Psoas muscle (tissue), 8 donors: ENCODE measurements at regions of chrX and their contacts with region 1.

Region 1: GRCh38 chrX:136055651-136056221 is 70.5 kb downstream of the SLC9A6 start:
- DNase-seq: peak; percentile 15 to 58
- ATAC-seq: peak; percentile 74 to 95 (median 92)
- H3K4me3 ChIP-seq: peak overlapping the region; percentile 16
- H3K27ac ChIP-seq: peak overlapping the region; percentile 69
- H3K4me1 ChIP-seq: peaks cover 21% of the 10 kb centered on the region
- H3K27me3 ChIP-seq: peaks cover 0 to 4% (median 0%) of the 10 kb centered on the region in 3 donors
- CTCF ChIP-seq: no peak

Region 2: DNA sequence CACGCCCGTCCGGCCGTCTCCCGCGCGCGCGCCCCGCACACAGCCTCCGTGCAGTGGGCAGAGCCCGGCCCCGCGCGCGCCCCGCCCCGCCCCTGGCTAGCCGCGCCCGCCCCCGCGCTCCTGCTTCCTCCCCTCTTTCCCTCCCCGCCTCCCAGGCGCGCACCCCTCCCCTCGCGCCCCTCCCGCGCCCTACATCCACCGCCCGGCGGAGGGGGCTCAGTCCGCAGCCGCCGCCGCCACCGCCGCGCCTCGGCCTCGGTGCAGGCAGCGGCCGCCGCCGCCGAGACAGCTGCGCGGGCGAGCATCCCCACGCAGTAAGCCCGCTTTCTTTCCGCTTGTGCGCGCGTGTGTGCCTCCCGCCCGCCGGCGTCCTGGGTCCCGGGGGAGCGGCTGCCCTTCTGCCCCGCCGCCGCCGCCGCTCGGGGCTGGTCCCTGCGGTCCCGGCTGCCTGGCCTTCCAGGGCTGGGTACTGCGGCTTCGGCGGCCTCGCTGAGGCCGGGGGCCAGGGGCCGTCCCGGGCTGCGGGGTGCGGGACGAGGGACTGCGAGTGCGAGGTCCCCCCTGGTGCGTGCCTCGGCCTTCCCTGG is 91.7 kb after region 1 on chrX and contains the start of gene FHL1:
- intact Hi-C with region 1: loop called in 1 of 2 experiments (anchors 10 kb)
- DNase-seq: peak; percentile 72 to 80
- ATAC-seq: peak; percentile 72 to 88 (median 86)
- H3K4me3 ChIP-seq: peak within 1 kb of the TSS; percentile 71
- H3K27ac ChIP-seq: peak within 1 kb of the TSS; percentile 69
- H3K4me1 ChIP-seq: no peaks in the 10 kb centered on the region
- H3K27me3 ChIP-seq: peaks cover 0 to 14% (median 0%) of the 10 kb centered on the region in 3 donors
- CTCF ChIP-seq: no peak
- total RNA-seq, gene FHL1: 6,074 to 8,382 (median 6,962) TPM

Region 3: GRCh38 chrX:136162831-136163570 is 107.3 kb after region 1 on chrX:
- intact Hi-C with region 1: loop called in 1 of 2 experiments (anchors 10 kb)
- DNase-seq: peak; percentile 55 to 78
- ATAC-seq: peak; percentile 74 to 85 (median 78)
- H3K4me3 ChIP-seq: no peak overlapping the region
- H3K27ac ChIP-seq: peak overlapping the region; percentile 32
- H3K4me1 ChIP-seq: peaks cover 12% of the 10 kb centered on the region
- H3K27me3 ChIP-seq: peaks cover 0 to 8% (median 0%) of the 10 kb centered on the region in 3 donors
- CTCF ChIP-seq: peak; percentile 80